K562 (cell line): ENCODE measurements at regions of chr22 and their contacts with region 1.

Region 1: DNA sequence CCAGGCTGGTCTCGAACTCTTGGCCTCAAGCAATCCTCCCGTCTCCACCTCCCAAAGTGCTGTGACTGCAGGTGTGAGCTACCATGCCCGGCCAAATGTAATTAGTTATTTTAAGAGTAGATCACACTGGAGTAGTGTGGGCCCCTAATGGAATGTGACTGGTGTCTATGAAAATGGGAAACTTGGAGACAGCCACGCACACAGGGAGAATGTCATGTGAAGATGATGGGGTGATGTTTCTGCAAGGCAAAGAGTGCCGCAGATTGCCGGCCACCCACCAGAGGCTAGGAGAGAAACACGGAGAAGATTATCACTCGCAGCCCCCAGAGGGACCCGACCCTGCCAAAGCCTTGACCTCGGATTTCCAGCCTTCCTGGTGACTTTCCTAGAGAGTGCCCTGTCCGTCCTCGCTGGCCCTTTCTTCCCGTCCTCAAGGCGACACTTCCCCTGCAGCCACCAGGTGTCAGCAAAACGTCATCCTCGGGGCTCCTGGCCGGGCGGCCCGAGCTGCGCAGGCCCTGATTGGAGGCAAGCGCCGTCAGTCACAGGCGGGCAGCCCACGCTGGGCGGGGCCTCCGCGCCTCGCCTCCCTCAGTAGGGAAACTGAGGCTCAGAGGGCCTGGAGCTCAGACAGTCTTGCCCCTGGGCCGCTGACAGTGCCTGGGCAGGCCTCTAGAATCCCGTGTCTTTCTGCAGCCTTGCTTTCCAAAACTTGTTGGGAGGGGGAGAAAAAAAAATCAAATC is 16.3 kb downstream of the CRYBB2 start:
- DNase-seq: peak; percentile 84 to 100 (median 99)
- ATAC-seq: peak; percentile 100
- H3K4me3 ChIP-seq: no peak overlapping the region
- H3K27ac ChIP-seq: no peak overlapping the region
- H3K4me1 ChIP-seq: peaks cover 0 to 5% of the 10 kb centered on the region in 2 experiments; a peak in 1 of 5 replicates
- H3K27me3 ChIP-seq: no peaks in the 10 kb centered on the region
- CTCF ChIP-seq: peak; percentile 74 to 85 (median 84)
- EP300 ChIP-seq: no peak
- POLR2A ChIP-seq: no peak
- RAD21 ChIP-seq: peak; percentile 64 to 88

Region 2: GRCh38 chr22:25219948-25220442 is 15.7 kb before region 1 on chr22:
- CTCF ChIA-PET with region 1: no interaction called
- POLR2A ChIA-PET with region 1: no interaction called
- in situ Hi-C with region 1: no loop called
- intact Hi-C with region 1: no loop called
- DNase-seq: no peak
- ATAC-seq: no peak
- H3K4me3 ChIP-seq: no peak overlapping the region
- H3K27ac ChIP-seq: no peak overlapping the region
- H3K4me1 ChIP-seq: no peaks in the 10 kb centered on the region
- H3K27me3 ChIP-seq: peaks cover 0 to 4% of the 10 kb centered on the region in 2 experiments; a peak in 2 of 5 replicates
- CTCF ChIP-seq: no peak
- EP300 ChIP-seq: no peak
- POLR2A ChIP-seq: no peak
- RAD21 ChIP-seq: no peak

Region 3: DNA sequence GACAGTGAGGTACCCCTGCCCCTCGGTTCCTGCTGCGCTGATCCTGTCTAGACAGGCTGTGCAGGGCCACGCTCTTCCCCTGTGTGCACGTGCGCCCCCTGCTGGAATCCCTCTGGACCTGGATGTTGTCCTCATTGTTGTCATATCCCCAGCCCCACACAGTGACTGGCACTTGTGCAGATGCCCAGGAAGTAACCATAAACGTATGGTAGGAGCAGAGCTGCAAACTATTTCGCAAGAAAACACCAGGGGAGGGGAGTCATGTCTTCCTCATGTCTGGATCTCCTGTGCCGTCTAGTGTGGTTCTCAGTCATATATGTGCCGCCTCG is 98.4 kb after region 1 on chr22:
- CTCF ChIA-PET with region 1: no interaction called
- POLR2A ChIA-PET with region 1: no interaction called
- in situ Hi-C with region 1: loop called (anchors 10 kb)
- intact Hi-C with region 1: loop called (anchors 5 kb)
- DNase-seq: peak; percentile 22 to 71 (median 29)
- ATAC-seq: peak; percentile 98
- H3K4me3 ChIP-seq: no peak overlapping the region
- H3K27ac ChIP-seq: no peak overlapping the region
- H3K4me1 ChIP-seq: no peaks in the 10 kb centered on the region
- H3K27me3 ChIP-seq: 0 out of 5 replicates have a peak, but pooled peaks cover 0 to 3% of the 10 kb centered on the region in 2 experiments
- CTCF ChIP-seq: peak; percentile 52 to 67 (median 62); a peak in 5 of 6 replicates
- EP300 ChIP-seq: no peak
- POLR2A ChIP-seq: no peak
- RAD21 ChIP-seq: peak in 1 of 2 experiments; percentile 42; a peak in 2 of 4 replicates

Region 4: DNA sequence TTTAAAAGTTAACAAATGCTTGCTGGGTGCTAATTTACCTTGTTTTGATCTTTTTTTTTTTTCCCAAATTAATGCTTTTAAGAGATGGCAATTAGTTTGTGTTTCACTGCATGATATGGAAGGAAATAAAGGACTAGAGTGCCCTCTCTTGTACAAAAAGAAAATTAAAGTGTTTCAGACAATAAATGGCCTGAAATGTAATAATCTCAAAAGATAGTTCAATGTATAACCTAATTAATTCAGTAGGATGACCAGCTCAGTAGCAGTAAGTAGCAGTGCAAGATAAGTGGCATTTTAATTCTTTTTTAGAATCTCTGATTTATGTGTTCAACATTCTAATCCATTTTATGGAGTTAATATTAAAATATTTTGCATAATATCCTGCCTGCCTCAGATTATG is 466.3 kb after region 1 on chr22:
- CTCF ChIA-PET with region 1: no interaction called
- POLR2A ChIA-PET with region 1: no interaction called
- in situ Hi-C with region 1: no loop called
- intact Hi-C with region 1: loop called (anchors 10 kb)
- DNase-seq: no peak
- ATAC-seq: no peak
- H3K4me3 ChIP-seq: no peak overlapping the region
- H3K27ac ChIP-seq: no peak overlapping the region
- H3K4me1 ChIP-seq: no peaks in the 10 kb centered on the region
- H3K27me3 ChIP-seq: no peaks in the 10 kb centered on the region
- CTCF ChIP-seq: peak in 2 of 3 experiments; percentile 16 to 51; a peak in 2 of 6 replicates
- EP300 ChIP-seq: no peak
- POLR2A ChIP-seq: no peak
- RAD21 ChIP-seq: peak; percentile 47 to 68